Thyroid gland (tissue), 4 donors: ENCODE measurements at regions of chr20 and their contacts with region 1.

Region 1: DNA sequence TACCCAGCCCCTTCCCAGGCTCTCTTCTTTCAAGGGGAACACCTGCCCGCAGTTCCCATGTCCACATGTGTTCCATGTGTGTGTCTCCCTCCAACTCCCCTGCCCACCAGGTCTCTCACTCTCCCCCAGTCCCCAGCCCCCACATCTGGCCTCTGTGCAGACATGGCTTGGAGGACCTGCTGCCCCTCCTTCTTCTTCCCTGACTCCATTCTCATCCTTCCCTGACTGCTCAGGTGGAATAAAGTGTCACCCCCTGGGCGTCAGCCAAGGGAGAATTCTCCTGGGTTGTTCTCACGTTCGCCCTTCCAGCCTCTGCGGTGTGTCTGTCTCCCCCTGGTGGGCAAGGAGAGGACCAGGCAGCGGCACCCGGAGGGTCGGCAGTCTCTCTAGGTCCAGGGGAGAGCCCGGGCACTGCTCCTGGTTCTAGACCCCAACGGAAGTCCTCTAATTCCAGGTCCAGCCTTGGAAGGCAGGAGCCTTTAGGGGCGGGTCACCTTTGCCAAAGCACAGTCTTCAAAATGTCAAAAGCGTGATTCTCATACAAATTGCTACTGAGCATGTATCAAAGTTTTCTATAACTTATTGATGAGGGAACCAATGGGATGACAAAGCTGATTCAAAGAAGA is 50.5 kb downstream of the EBF4 start:
- DNase-seq: peak; percentile 96 to 97
- H3K4me3 ChIP-seq: no peak overlapping the region
- H3K27ac ChIP-seq: no peak overlapping the region
- H3K4me1 ChIP-seq: peaks cover 7 to 13% of the 10 kb centered on the region in 2 donors
- H3K27me3 ChIP-seq: no peaks in the 10 kb centered on the region
- CTCF ChIP-seq: peak; percentile 67 to 94 (median 90)
- POLR2A ChIP-seq: no peak

Region 2: GRCh38 chr20:2692036-2692885 is 50.8 kb before region 1 on chr20 and contains the start of gene EBF4:
- intact Hi-C with region 1: loop called (anchors 5 kb)
- DNase-seq: peak; percentile 65 to 69
- H3K4me3 ChIP-seq: peak within 1 kb of the TSS; percentile 32 to 58 (median 42)
- H3K27ac ChIP-seq: peak within 1 kb of the TSS; percentile 25 to 73 (median 50)
- H3K4me1 ChIP-seq: peaks cover 3 to 22% of the 10 kb centered on the region in 2 donors
- H3K27me3 ChIP-seq: no peaks in the 10 kb centered on the region
- CTCF ChIP-seq: no peak
- POLR2A ChIP-seq: peak in 1 of 2 donors; percentile 67
- total RNA-seq, gene EBF4: 24.2 to 55.8 (median 42.4) TPM

Region 3: DNA sequence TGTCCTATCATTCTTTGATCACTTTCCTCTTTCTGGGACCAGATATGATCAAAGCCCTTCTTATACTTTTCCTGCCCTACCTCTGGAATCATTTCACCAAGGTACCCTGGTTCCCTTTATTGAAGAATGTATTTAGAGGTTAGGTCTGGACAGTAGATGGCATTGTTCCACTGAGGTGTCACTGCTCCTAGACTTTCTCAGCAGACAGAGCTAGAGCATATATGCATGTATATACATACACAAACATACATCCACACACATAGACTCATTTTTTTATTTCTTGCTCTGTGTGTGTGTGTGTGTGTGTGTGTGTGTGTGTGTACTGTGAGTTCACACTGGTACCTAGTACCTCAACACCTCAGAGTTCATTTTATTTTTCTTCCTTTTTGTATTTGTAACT is 171.1 kb after region 1 on chr20:
- intact Hi-C with region 1: no loop called
- DNase-seq: no peak
- H3K4me3 ChIP-seq: no peak overlapping the region
- H3K27ac ChIP-seq: no peak overlapping the region
- H3K4me1 ChIP-seq: no peaks in the 10 kb centered on the region
- H3K27me3 ChIP-seq: no peaks in the 10 kb centered on the region
- CTCF ChIP-seq: peak in 1 of 6 experiments; percentile 18
- POLR2A ChIP-seq: no peak